Activated CD8-positive, alpha-beta memory T cell treated with anti-CD3 and anti-CD28 coated beads, Interleukin-2, amount 10 ng/mL, durations not matched to agents 7 days and 5 days (primary cell): ENCODE measurements at regions of chr11 and their contacts with region 1.

Region 1: DNA sequence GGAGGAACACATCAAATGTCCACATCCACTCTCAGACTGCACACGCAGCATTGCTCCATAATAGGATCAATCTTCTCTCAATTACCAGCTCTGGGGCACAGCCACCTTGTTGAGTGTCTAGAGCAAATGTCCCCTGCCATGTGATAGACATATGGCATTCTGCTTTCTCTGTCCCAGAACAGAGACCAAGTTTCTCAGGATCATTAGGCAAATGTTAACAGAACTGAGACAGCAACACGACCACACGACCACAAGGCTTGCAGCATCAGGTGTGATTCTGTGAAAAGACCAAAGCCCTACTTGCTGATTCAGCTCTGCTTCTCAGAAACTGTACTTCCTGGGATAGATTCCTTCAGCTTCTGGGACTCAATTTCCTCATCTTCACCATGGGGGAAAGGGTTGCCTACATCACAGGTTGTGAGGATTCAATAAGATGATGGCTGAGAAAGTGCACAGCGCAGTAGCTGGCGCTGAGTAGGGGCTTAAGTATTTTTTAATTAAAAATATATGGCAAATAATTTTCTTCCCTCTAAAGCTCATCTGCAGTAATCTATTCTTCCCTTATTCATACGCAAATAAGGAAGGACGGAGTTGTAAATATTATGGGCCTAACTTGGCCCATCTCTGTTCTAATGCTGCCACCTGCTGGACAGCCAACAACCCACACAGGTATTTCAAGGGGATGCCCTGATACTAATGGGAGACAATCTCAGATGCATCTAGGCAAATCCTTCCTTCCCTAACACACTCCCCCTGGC is 54.3 kb upstream of the USP47 start:
- DNase-seq: peak; percentile 73
- ATAC-seq: peak; percentile 85
- H3K4me3 Mint-ChIP-seq: no peak overlapping the region
- H3K27ac Mint-ChIP-seq: no peak overlapping the region
- H3K4me1 Mint-ChIP-seq: peaks cover 12% of the 10 kb centered on the region
- H3K27me3 Mint-ChIP-seq: peaks cover 19% of the 10 kb centered on the region

Region 2: DNA sequence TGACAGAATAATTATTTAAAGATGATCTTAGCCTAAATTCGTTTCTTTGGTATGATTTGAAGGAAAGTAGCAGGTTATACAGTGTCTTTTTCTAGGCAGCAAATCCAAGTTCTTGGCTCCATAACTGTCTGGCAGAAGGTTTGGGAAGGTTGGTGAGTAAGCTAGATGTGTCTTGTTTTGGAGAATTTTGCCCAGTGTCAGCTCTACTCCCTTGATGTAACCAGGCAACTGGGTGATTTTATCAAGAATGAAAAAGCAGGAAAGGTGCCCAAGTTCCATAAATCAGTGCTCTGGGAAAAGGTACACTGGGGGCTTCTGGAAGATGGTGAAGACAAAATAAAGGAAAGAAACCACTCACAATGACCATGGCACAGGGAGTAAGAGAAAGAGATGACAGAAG is 17.2 kb before region 1 on chr11:
- CTCF ChIA-PET with region 1: no interaction called
- DNase-seq: no peak
- ATAC-seq: no peak
- H3K4me3 Mint-ChIP-seq: no peak overlapping the region
- H3K27ac Mint-ChIP-seq: no peak overlapping the region
- H3K4me1 Mint-ChIP-seq: no peaks in the 10 kb centered on the region
- H3K27me3 Mint-ChIP-seq: peaks cover 39% of the 10 kb centered on the region

Region 3: GRCh38 chr11:11848891-11849746 is 61.6 kb after region 1 on chr11:
- CTCF ChIA-PET with region 1: interaction called, 12 read pairs
- DNase-seq: peak; percentile 75
- ATAC-seq: peak; percentile 81
- H3K4me3 Mint-ChIP-seq: no peak overlapping the region
- H3K27ac Mint-ChIP-seq: peak overlapping the region; percentile 57
- H3K4me1 Mint-ChIP-seq: peaks cover 69% of the 10 kb centered on the region
- H3K27me3 Mint-ChIP-seq: no peaks in the 10 kb centered on the region